Sciatic nerve (tissue), 2 donors: ENCODE measurements at regions of chr16 and their contacts with region 1.

Region 1: DNA sequence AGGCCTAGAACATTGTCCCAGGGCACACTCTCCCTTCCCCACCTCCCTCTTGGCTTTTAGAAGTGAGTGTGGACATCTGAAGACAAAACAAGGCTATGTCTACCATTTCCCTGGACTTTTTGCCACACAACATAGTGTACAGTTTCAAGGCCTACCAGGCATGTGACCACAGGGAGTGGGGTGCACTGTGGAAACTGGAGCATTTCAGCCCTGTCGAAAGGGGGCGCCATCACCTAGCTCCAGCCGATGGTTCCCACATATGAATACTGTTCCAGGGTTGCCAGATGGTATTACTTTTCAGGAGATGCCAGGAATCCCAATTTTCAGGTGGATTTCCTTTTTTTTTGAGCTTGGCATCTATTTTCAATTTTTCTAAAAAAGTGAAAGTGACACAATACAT is 140.7 kb downstream of the KATNIP start:
- DNase-seq: no peak
- ATAC-seq: peak; percentile 88

Region 2: DNA sequence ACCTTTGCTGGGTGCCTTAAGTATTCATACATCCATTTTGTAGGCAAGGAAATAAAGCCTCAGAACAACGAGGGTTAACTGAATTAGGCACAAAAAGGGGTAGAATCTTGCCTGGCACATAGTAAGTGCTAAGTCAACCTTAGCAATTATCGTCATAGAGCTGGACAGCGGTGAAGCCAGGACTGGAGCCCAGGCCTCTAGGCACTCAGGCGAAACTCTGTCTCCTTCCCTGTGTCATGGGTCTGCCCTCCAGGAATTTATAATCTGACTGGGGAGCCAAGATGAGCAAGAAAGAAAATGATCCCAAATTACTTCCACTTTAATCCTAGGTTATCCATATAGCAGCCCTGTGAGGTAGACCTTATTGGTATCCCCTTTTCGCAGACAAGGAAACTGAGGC is 79.3 kb before region 1 on chr16:
- intact Hi-C with region 1: no loop called
- DNase-seq: no peak
- ATAC-seq: no peak

Region 3: DNA sequence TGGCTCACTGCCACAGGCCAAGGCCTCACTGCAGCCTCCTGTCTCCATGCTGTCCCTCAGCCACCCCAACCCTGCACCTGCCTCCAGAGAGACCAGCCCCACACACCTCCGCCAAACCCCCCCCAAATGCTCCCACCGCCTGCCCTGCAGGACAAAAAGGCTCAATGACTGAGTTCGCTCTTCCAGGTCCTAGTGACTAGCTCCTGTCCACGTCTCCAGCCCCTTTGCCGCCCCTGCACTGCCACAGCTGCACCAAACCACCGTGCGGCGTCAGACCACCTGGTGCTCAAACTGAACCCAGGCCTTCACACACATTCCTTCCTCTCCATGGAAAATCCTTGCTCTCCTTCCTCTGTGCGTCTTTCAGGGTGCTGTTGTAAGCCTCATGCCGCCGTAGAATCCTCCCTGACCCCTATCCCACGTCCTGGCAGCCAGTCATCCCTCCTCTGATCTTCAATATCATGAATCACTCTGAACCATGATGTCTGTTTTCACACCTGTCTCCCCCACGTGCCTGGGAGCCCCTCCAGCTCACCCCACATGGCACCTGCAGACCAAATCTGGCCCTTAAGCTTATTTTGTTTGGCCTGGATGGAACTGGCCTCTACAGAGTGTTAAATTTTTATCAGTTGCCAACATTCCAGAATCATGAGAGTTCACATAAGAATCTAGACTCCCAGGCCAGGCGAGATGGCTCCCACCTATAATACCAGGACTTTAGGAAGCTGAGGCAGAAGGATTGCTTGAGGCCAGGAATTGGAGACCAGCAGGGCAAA is 377.2 kb after region 1 on chr16:
- intact Hi-C with region 1: loop called (anchors 5 kb)
- DNase-seq: no peak
- ATAC-seq: peak; percentile 78